Psoas muscle (tissue), 8 donors: ENCODE measurements at regions of chr5 and their contacts with region 1.

Region 1: GRCh38 chr5:176647030-176647866 is at the start of gene TSPAN17:
- DNase-seq: peak; percentile 100
- ATAC-seq: peak; percentile 98
- H3K4me3 ChIP-seq: peak within 1 kb of the TSS; percentile 87
- H3K27ac ChIP-seq: peak within 1 kb of the TSS; percentile 80
- H3K4me1 ChIP-seq: peaks cover 11% of the 10 kb centered on the region
- H3K27me3 ChIP-seq: no peaks in the 10 kb centered on the region
- CTCF ChIP-seq: peak; percentile 46
- total RNA-seq, gene TSPAN17: 22.5 to 31.2 (median 28.2) TPM

Region 2: GRCh38 chr5:176573564-176574296 is 73.5 kb before region 1 on chr5:
- intact Hi-C with region 1: loop called (anchors 2 to 5 kb)
- DNase-seq: peak; percentile 69 to 86
- ATAC-seq: peak; percentile 81 to 98 (median 92)
- H3K4me3 ChIP-seq: no peak overlapping the region
- H3K27ac ChIP-seq: no peak overlapping the region
- H3K4me1 ChIP-seq: no peaks in the 10 kb centered on the region
- H3K27me3 ChIP-seq: peaks cover 0 to 3% (median 0%) of the 10 kb centered on the region in 3 donors
- CTCF ChIP-seq: peak; percentile 83

Region 3: GRCh38 chr5:176609724-176610434 is 37.4 kb before region 1 on chr5 and contains the start of gene GPRIN1:
- intact Hi-C with region 1: loop called in 1 of 2 experiments (anchors 5 kb)
- DNase-seq: peak; percentile 63 to 70
- ATAC-seq: peak; percentile 82 to 93 (median 86)
- H3K4me3 ChIP-seq: peak within 1 kb of the TSS; percentile 67
- H3K27ac ChIP-seq: no peak within 1 kb of the TSS
- H3K4me1 ChIP-seq: no peaks in the 10 kb centered on the region
- H3K27me3 ChIP-seq: peaks cover 0 to 40% (median 4%) of the 10 kb centered on the region in 3 donors
- CTCF ChIP-seq: peak; percentile 38
- total RNA-seq, gene GPRIN1: 0.21 to 0.71 (median 0.37) TPM